BJ (cell line): ENCODE measurements at regions of chr6 and their contacts with region 1.

Region 1: DNA sequence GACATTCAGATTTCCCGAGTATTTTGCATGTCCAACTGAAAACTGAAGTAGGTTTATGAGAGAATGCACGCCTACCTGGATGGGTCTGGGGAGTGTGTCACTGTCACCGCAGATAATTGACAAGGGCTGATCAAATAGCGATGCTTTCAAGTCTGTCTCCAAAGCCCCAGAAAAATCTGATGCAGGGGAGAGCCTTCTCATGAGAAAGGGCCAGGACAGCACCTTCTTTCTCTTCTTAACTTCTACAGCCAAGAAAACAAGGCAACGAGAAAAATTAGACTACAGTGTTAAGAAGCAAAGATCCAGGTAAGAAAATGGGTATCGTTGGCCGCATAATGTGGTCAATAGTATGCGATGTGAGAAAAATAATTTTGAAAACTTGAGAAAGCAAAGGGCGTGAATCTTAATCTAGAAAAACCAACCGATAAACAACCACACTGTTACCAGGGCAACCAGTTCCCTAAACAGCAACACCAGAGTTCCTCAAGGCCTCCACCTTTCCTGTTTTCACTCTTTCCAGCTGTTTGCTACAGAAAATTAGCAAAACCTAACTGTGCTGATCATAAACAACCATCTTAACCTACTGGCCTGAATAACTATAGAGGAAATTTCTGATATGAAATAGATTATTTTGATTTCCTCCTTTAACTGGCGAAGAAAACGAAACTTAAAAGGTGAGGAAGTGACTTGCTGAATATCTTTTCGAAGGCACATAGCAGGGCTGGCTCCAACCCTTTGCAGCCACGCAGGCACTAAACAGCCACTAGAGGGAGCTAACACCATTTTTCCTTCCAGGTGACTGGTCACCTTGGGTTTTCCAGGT is 2.6 kb downstream of the TAGAP start:
- DNase-seq: no peak
- H3K4me3 ChIP-seq: no peak overlapping the region
- H3K27me3 ChIP-seq: peaks cover 9% of the 10 kb centered on the region
- CTCF ChIP-seq: peak; percentile 94

Region 2: GRCh38 chr6:159030168-159030567 is 12.0 kb before region 1 on chr6:
- CTCF ChIA-PET with region 1: interaction called, 10 read pairs
- POLR2A ChIA-PET with region 1: no interaction called
- DNase-seq: no peak
- H3K4me3 ChIP-seq: no peak overlapping the region
- H3K27me3 ChIP-seq: no peaks in the 10 kb centered on the region
- CTCF ChIP-seq: no peak

Region 3: GRCh38 chr6:159104163-159104925 is 62.1 kb after region 1 on chr6:
- CTCF ChIA-PET with region 1: interaction called, 33 read pairs
- POLR2A ChIA-PET with region 1: no interaction called
- DNase-seq: no peak
- H3K4me3 ChIP-seq: no peak overlapping the region
- H3K27me3 ChIP-seq: no peaks in the 10 kb centered on the region; the same call in 1 of the 2 replicates
- CTCF ChIP-seq: peak; percentile 84

Region 4: GRCh38 chr6:159125014-159125609 is 82.9 kb after region 1 on chr6:
- CTCF ChIA-PET with region 1: interaction called, 13 read pairs
- POLR2A ChIA-PET with region 1: no interaction called
- DNase-seq: no peak
- H3K4me3 ChIP-seq: no peak overlapping the region
- H3K27me3 ChIP-seq: peaks cover 2% of the 10 kb centered on the region; the same call in 1 of the 2 replicates
- CTCF ChIP-seq: peak; percentile 28

Region 5: DNA sequence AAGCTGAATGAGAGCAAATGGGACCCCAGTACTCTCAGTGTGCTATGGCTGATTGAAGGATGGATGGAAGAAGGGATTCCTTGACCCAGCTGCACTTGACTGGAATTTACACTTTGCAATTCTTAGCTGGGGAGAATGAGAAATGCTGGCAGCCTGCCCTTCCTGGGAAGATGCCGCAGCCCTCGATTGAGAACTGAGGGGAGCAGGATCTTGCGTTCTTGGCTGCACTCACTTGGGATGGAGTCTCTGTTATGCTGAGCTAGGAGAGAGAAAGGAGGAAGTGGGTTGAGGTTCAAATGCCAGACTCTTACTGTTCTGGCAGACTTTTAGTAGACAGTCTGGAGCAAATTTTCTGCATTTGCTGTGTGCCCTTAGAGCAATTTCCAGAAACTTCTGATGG is 348.2 kb after region 1 on chr6:
- CTCF ChIA-PET with region 1: no interaction called
- POLR2A ChIA-PET with region 1: no interaction called
- DNase-seq: no peak
- H3K4me3 ChIP-seq: no peak overlapping the region
- H3K27me3 ChIP-seq: no peaks in the 10 kb centered on the region
- CTCF ChIP-seq: no peak